ENCODE measurements at regions of chr3 and their contacts with region 1.

Region 1: DNA sequence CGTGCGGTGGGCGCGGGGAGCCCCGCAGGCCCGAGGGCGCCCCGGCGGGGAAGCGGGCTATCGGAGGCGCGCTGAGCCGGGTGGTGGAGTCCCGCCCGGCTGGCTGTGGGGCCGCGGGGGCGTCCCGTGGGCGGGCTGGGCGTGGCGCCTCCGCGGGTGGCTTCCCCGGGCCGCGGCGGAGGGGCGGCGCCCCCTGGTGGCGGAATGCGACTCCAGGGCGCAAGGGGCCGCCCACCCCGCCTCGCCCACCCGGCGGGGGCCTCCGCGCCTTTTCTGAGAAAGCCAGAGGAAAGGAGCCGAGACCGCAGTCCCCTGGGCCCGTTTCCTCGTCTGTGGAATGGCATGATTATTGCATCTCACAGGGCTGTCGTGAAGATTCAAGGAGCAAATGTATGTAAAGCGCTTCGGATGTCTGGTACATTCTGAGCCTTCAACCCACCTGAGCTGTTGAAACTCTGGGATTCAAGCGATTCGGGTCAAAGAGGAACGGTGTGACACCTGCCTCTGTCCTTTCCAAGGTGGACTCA is 31.9 kb upstream of the RAB6B start:
- DNase-seq: peak; percentile 19
- ATAC-seq: peak; percentile 69
- H3K4me3 ChIP-seq: peak overlapping the region; percentile 63
- H3K27ac ChIP-seq: no peak overlapping the region
- H3K4me1 ChIP-seq: no peaks in the 10 kb centered on the region
- H3K27me3 ChIP-seq: no peaks in the 10 kb centered on the region
- CTCF ChIP-seq: peak; percentile 57; the same call in 1 of the 2 replicates

Region 2: GRCh38 chr3:133443649-133444422 is 483.8 kb before region 1 on chr3:
- CTCF ChIA-PET with region 1: no interaction called
- POLR2A ChIA-PET with region 1: no interaction called
- intact Hi-C with region 1: loop called (anchors 1 kb)
- DNase-seq: peak; percentile 91
- ATAC-seq: peak; percentile 90
- H3K4me3 ChIP-seq: no peak overlapping the region
- H3K27ac ChIP-seq: peak overlapping the region; percentile 66
- H3K4me1 ChIP-seq: peaks cover 15% of the 10 kb centered on the region
- H3K27me3 ChIP-seq: no peaks in the 10 kb centered on the region
- CTCF ChIP-seq: peak; percentile 26; the same call in 1 of the 2 replicates

Region 3: DNA sequence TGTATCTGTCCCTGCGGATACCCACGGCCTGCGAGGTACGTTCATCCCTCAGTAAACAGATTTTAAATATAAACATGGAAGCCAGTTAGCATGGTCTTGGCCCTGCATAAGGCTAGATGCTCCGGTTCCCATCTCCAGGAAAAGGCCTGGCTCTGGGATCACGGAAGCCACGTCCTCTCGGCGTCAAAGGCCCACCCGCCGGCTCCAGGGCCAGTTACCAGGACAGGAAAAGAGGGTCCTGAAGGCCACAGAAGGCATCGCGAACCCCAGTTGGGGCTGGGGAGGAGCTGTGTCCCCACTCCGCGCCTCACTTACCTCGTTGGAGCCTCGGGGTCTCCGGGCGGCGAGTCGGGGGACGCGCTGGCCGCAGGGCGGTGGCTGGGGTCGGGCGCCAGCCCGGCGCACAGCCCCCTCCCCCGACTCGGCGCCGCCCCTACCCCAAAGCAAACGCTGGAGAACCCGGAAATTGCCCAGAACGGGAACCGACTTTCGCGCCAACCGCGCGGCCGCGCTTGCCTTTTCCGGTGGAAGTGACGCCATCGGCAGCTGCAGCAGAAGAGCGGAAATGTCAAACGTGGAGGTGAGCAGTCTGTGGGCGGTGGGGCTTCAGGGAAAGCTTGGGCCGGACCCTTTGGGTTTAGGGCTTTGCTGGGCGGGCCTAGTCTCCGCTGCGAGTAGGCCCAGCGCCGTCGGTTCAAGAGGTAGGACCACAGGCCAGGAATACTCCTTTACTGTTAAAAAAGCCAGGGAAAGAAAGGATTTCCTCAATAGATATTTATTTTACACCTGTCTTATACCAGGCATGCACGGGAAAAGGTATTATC is 265.9 kb before region 1 on chr3 and contains the start of gene TOPBP1:
- CTCF ChIA-PET with region 1: no interaction called
- POLR2A ChIA-PET with region 1: no interaction called
- intact Hi-C with region 1: loop called (anchors 5 kb)
- DNase-seq: peak; percentile 72
- ATAC-seq: peak; percentile 83
- H3K4me3 ChIP-seq: peak within 1 kb of the TSS; percentile 95
- H3K27ac ChIP-seq: peak within 1 kb of the TSS; percentile 57
- H3K4me1 ChIP-seq: peaks cover 12% of the 10 kb centered on the region; the same call in 1 of the 2 replicates
- H3K27me3 ChIP-seq: no peaks in the 10 kb centered on the region
- CTCF ChIP-seq: no peak
- total RNA-seq, gene TOPBP1: 29.0 and 42.4 TPM in 2 replicates

Region 4: DNA sequence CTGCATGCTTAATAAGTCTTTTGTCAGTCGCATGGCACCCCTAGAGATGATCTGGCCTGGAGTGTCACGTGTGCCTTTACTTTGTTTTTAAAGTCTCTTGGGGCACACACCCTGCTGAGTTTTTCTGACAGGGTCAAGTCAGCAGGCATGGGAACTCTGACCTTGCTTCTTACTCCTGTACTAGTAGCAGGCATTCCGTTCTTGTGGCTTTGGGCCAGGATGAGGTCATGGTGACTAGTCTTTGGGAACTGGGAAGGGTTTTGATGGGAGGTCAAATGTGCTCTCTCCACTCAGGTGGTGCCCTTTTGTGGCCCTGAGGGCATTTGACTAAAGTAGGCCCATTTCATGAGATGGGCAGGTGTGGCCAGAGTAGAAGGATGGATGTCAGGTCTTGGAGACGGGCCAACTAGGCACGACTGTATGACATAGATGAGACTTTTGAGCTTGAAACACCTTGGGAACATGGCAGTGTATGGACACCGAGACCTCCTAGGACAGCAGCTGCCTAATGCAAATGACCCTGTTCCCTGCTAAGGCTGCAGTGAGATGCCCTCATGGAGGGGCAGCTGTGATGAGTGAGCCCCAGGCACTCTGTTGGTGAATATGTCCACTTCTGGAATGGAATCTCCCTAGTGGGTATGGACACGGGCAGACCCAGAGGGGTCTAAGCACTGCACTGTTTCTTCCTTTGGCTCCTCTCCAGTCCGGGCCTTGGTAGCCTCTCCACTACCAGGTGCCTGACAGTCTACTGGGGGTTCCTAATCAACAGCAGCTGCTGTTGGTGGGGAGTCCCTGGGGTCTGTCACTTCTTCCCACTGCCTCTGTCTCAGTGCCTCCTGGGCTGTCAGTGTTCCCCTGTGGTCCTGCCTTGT is 105.6 kb before region 1 on chr3:
- CTCF ChIA-PET with region 1: no interaction called
- POLR2A ChIA-PET with region 1: no interaction called
- intact Hi-C with region 1: loop called (anchors 1 kb)
- DNase-seq: peak; percentile 66
- ATAC-seq: peak; percentile 38; the same call in 1 of the 2 replicates
- H3K4me3 ChIP-seq: no peak overlapping the region
- H3K27ac ChIP-seq: no peak overlapping the region
- H3K4me1 ChIP-seq: peaks cover 7% of the 10 kb centered on the region
- H3K27me3 ChIP-seq: no peaks in the 10 kb centered on the region
- CTCF ChIP-seq: no peak

Region 5: GRCh38 chr3:134197681-134198261 is 270.2 kb after region 1 on chr3:
- CTCF ChIA-PET with region 1: no interaction called
- POLR2A ChIA-PET with region 1: no interaction called
- intact Hi-C with region 1: loop called (anchors 5 kb)
- DNase-seq: peak; percentile 72
- ATAC-seq: peak; percentile 48
- H3K4me3 ChIP-seq: no peak overlapping the region
- H3K27ac ChIP-seq: no peak overlapping the region
- H3K4me1 ChIP-seq: peaks cover 20% of the 10 kb centered on the region
- H3K27me3 ChIP-seq: no peaks in the 10 kb centered on the region
- CTCF ChIP-seq: peak; percentile 77

Region 6: DNA sequence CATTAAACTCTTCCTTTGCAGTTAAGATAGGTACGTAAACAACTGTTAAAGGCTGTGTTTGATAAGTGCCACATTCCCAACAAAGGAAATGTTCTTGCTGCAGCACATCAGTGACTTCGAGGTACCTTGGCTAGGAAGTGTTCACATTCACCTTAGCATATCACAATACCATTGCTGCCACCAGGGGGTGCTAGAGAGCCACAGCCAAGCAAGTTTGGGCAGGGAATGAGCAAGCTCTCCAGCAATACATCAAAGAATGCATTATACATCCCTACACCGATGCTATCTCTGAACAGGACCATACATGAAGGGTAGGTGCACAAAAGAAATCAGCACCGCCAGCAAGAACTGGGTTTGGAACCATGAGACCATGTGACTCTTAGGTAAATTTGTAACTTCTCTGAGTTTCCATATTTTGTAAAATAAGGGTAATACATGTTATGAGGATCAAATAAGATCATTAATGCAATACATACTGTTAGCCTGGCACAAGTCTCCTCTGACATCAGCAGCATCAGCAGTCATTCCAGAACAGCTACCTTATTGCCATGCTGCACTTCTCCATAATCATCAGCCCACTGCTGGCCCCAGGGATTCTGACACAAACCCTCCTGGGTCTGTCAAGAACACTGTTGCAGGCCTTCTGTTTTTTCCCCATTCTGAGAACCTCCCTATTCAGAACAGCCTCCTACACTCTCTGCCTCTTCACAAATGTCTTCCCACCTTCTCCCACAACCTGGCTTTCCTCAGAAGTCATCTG is 285.5 kb after region 1 on chr3:
- CTCF ChIA-PET with region 1: no interaction called
- POLR2A ChIA-PET with region 1: no interaction called
- intact Hi-C with region 1: loop called (anchors 1 kb)
- DNase-seq: peak; percentile 86
- ATAC-seq: peak; percentile 96
- H3K4me3 ChIP-seq: no peak overlapping the region
- H3K27ac ChIP-seq: no peak overlapping the region
- H3K4me1 ChIP-seq: no peaks in the 10 kb centered on the region
- H3K27me3 ChIP-seq: no peaks in the 10 kb centered on the region
- CTCF ChIP-seq: peak; percentile 87

Region 7: DNA sequence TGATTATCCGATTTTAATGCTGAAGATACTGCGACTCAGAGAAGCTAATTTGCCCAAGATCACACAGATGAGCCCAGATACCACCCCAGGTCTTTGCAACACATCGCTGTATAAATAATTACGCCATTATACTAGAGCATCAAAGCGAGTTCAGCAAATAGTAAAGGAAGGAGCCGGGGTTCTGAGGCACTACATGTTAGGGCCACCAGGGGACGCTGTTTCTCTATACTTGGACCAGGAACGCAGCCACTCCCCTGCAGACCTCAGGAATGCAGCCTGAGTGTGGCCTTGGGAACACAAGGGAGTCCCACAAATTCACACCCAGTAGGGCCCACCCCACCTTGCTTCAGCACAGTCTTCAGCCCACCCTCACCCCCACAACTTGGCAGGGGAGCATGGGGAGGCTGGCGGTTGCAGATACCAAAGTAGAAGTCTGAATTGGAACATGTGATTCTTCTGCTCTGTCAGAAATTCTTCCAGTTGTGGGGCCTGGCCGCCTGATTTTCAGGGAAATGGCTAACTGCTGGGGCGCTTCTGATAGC is 380.8 kb after region 1 on chr3:
- CTCF ChIA-PET with region 1: no interaction called
- POLR2A ChIA-PET with region 1: no interaction called
- intact Hi-C with region 1: loop called (anchors 10 kb)
- DNase-seq: peak; percentile 86
- ATAC-seq: peak; percentile 75
- H3K4me3 ChIP-seq: peak overlapping the region; percentile 67
- H3K27ac ChIP-seq: no peak overlapping the region
- H3K4me1 ChIP-seq: peaks cover 38% of the 10 kb centered on the region
- H3K27me3 ChIP-seq: no peaks in the 10 kb centered on the region
- CTCF ChIP-seq: peak; percentile 92